GM12878 (cell line): ENCODE measurements at regions of chr1 and their contacts with region 1.

Region 1: DNA sequence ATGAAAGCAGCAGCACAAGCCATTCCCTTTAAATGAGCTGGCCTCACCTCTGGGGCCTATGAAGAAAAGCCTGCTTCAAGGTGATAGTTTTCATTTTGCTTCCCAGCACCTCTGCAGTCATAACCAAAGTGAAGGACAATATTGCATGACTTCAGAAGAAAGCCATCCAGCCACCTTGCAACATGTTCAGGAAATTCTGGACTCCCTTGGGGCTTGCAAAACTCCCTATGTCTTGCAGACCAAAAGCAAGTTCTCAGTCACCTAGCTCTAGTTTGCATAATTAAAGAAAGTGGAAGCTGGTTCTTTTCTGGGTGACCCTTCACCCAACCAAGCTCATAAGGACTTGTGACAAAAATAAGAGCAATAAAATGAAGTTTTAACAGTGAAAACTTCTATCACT is 87.6 kb downstream of the GFI1 start:
- DNase-seq: peak; percentile 60
- ATAC-seq: peak; percentile 90
- H3K4me3 ChIP-seq: no peak overlapping the region
- H3K27ac ChIP-seq: no peak overlapping the region
- H3K4me1 ChIP-seq: peaks cover 5% of the 10 kb centered on the region; the same call in 1 of the 2 replicates
- H3K27me3 ChIP-seq: no peaks in the 10 kb centered on the region
- CTCF ChIP-seq: no peak
- EP300 ChIP-seq: peak in 1 of 2 experiments; percentile 49; a peak in 1 of 4 replicates
- POLR2A ChIP-seq: no peak
- RAD21 ChIP-seq: peak; percentile 13; the same call in 1 of the 2 replicates

Region 2: GRCh38 chr1:92410706-92411105 is 11.6 kb after region 1 on chr1:
- CTCF ChIA-PET with region 1: interaction called, 4 read pairs
- POLR2A ChIA-PET with region 1: no interaction called
- RAD21 ChIA-PET with region 1: no interaction called
- SMC1A ChIA-PET with region 1: interaction called, 11 read pairs
- in situ Hi-C with region 1: no loop called
- intact Hi-C with region 1: no loop called
- DNase-seq: no peak
- ATAC-seq: peak; percentile 20; the same call in 1 of the 3 replicates
- H3K4me3 ChIP-seq: no peak overlapping the region
- H3K27ac ChIP-seq: no peak overlapping the region
- H3K4me1 ChIP-seq: no peaks in the 10 kb centered on the region; the same call in 1 of the 2 replicates
- H3K27me3 ChIP-seq: no peaks in the 10 kb centered on the region
- CTCF ChIP-seq: no peak
- EP300 ChIP-seq: no peak
- POLR2A ChIP-seq: no peak
- RAD21 ChIP-seq: no peak